ENCODE measurements at regions of chr9 and their contacts with region 1.

Region 1: GRCh38 chr9:87069690-87070089 is 122.4 kb upstream of the GAS1 start:
- DNase-seq: no peak
- H3K4me3 ChIP-seq: no peak overlapping the region
- CTCF ChIP-seq: no peak

Region 2: DNA sequence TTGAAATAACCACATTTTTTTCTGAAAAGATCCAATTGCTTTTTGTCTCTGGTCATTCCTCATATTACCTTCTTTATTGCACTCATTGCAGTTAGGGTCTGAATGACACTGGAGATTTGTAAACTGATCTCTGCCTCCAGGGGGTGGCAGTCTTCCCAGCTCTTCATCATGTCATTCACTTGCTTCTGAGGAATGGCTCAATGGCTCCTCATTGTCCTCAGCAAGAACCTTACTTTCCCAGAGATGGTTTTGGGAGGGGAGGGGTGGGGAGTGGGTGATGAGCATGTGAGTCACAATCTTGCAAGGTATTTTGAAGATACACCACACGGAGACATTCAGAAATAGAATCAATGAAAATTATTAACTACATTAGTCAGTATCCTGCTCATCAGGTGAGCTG is 37.4 kb after region 1 on chr9:
- in situ Hi-C with region 1: loop called (anchors 5 kb)
- DNase-seq: no peak
- H3K4me3 ChIP-seq: no peak overlapping the region
- CTCF ChIP-seq: no peak

Region 3: DNA sequence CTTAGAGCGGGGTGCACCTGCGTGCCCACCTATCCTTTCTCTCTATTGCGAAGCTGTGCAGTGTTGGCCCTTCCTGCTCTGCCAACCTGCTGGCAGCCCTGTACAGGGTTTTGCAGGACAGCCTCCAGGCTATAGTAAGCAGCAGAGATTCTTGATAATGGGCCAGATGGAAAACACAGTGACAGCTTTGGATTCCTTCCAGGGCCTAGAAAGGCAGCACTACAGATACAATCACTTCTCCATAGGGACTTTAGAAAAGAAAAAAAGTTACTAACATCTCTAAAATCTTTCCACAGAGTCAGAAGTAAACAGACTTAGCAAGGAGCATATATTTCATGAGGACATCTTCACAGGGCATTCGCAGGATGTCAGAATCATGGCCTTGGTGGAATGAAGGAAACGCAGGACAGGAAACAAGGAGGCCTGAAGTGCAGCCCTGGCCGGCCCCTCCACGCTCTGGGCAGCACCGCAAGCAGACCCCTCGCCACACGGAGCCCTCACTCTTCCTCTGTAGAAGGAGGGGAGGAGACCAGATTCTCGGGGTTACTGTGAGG is 49.7 kb after region 1 on chr9:
- in situ Hi-C with region 1: no loop called
- DNase-seq: peak; percentile 73
- H3K4me3 ChIP-seq: no peak overlapping the region
- CTCF ChIP-seq: no peak